ENCODE measurements at regions of chr4 and their contacts with region 1.

Region 1: GRCh38 chr4:8228319-8229250 is 29.5 kb downstream of the SH3TC1 start:
- DNase-seq: peak; percentile 71
- CTCF ChIP-seq: no peak

Region 2: DNA sequence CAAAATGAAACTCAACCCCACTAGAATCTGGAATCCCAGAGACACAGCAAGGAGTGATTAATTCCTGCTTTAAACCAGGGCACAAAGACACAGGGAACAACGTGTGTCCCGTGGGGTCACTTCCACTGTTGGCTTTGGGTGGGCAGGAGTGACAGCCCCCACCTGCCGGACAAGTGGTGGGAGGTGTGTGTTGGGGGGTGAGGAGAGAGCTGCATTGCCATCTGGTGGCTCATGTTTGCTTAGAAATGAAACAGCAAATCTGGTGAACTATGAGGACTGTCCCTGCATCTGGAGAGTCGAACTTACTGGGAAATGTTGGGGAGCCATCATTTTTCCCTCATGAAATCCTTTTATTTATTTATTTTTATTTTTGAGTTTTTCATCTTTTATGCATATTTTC is 213.1 kb before region 1 on chr4:
- CTCF ChIA-PET with region 1: no interaction called
- POLR2A ChIA-PET with region 1: no interaction called
- DNase-seq: no peak
- CTCF ChIP-seq: peak; percentile 27

Region 3: GRCh38 chr4:8215001-8215427 is 13.6 kb before region 1 on chr4:
- CTCF ChIA-PET with region 1: interaction called, 23 read pairs
- POLR2A ChIA-PET with region 1: interaction called, 3 read pairs
- DNase-seq: no peak
- CTCF ChIP-seq: no peak

Region 4: DNA sequence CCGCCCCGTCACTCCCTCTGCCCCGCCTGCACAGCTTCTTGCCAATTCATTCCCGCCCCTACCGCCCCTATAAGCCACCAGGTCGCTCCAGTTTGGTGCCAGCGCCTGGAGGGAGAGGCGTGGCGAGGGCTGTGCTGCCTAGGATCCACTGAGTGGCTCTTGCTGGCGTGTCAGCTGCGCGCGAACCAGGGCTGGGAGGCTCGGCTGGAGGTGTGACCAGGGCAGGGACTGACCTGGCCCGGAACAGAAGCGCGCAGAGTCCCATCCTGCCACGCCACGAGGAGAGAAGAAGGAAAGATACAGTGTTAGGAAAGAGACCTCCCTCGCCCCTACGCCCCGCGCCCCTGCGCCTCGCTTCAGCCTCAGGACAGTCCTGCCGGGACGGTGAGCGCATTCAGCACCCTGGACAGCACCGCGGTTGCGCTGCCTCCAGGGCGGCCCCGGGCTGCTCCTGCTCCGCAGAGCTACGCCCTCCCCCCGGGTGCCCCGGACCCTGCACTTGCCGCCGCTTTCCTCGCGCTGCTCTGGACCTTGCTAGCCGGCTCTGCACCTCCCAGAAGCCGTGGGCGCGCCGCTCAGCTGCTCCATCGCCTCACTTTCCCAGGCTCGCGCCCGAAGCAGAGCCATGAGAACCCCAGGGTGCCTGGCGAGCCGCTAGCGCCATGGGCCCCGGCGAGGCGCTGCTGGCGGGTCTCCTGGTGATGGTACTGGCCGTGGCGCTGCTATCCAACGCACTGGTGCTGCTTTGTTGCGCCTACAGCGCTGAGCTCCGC is 351.9 kb after region 1 on chr4 and contains the start of gene GPR78:
- CTCF ChIA-PET with region 1: no interaction called
- POLR2A ChIA-PET with region 1: no interaction called
- DNase-seq: peak; percentile 69
- CTCF ChIP-seq: no peak

Measured in GM10248 (cell line).